Sciatic nerve (tissue), 2 donors: ENCODE measurements at regions of chr4 and their contacts with region 1.

Region 1: GRCh38 chr4:123613586-123614344 is 217.2 kb downstream of the SPRY1 start:
- DNase-seq: no peak
- ATAC-seq: no peak

Region 2: DNA sequence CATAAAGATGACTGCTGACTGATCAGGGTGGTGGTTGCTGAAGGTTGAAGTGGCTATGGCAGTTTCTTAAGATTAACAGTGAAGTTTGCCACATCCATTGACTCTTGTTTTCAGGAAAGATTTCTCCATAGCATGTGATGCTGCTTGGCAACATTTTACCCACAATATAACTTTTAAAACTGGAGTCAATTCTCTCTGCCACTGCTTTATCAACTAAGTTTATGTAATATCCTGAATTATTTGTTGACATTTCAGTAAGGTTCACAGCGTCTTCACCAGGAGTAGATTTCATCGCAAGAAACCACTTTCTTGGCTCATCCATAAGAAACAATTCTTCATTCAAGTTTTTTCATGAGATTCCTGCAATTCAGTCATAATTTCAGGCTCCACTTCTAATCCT is 383.7 kb before region 1 on chr4:
- intact Hi-C with region 1: no loop called
- DNase-seq: no peak
- ATAC-seq: no peak

Region 3: DNA sequence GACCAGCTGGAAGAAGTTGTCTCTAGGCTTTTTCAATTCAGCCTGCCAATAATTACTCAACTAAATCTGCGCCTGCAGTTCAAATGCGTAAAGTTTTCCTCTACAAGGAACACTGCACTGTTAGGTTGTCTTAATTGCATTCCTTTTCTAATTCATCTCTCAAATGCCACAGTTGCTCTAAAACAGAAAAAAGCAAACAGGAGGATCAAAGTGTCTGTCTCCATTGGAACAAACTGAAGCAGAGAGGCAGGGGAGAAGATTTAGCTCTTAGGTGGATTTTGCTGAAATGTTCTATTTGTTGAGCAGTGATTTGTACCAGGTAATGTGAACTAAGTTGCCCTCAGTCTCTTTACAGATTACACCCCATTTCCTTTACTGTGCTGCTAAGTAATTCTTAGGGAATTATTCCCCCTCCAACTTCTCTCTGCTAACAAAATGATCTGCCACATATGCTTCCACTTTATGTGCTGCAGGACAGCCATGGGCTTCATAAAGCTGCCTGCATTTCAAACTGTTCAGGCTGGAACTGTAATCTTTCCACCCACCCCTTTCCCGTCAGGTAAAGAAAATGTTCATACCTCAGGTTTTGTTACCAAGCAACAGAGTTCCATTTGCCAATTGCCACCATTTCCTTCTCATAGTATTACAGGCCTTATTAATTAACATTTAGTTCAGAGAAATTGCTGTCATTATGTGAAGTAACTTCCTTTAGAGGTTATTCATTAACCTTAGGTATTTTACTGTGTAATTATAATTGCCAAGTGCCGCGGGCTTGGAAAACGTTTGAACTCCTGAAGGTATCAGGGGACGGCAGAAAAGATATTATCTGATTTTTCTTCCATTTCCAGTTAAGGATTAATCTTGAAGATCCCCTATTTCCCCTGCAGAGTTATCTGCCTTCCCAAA is 67.8 kb before region 1 on chr4:
- intact Hi-C with region 1: loop called (anchors 2 kb)
- DNase-seq: no peak
- ATAC-seq: no peak